Activated CD4-positive, alpha-beta T cell treated with anti-CD3 and anti-CD28 coated beads, Interleukin-2, amount 10 ng/mL, durations not matched to agents 24 days and 14 days (primary cell): ENCODE measurements at regions of chr11 and their contacts with region 1.

Region 1: GRCh38 chr11:128582496-128583366 is 4.6 kb downstream of the ETS1 start:
- DNase-seq: no peak
- H3K4me3 Mint-ChIP-seq: peak overlapping the region; percentile 59
- H3K27ac Mint-ChIP-seq: peak overlapping the region; percentile 81
- H3K4me1 Mint-ChIP-seq: peaks cover 35% of the 10 kb centered on the region
- H3K27me3 Mint-ChIP-seq: peaks cover 7% of the 10 kb centered on the region

Region 2: DNA sequence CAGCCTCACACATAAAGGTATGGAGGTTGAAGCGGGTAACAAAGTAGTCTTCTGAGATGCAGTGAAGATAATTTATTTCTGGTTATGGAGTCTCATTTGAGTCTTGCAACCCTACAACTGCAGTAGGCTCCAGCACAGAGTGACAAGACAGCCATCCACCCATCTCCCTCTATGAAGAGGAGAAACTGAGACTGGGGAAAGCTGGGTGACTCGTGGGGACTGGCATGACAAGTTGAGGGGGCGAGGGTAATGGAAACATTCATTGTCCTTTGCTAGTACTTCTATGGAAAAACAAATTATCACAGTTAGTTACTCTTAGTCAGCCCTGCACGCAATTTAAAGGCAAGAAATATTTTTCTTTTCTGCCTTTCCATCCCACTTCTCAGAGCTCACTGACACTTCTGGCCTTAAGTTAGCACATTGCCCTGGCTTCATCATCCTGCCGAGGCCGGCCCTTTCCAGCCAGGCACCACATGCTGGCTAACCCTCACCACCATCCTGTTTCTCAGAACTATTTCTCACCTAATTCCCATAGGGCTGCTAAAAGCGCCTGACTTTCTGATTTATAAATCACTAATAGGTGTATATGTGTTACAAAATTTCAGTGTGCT is 356.5 kb before region 1 on chr11:
- intact Hi-C with region 1: loop called (anchors 2 kb)
- DNase-seq: peak; percentile 58
- H3K4me3 Mint-ChIP-seq: peak overlapping the region; percentile 39
- H3K27ac Mint-ChIP-seq: peak overlapping the region; percentile 91
- H3K4me1 Mint-ChIP-seq: peaks cover 33% of the 10 kb centered on the region
- H3K27me3 Mint-ChIP-seq: no peaks in the 10 kb centered on the region

Region 3: DNA sequence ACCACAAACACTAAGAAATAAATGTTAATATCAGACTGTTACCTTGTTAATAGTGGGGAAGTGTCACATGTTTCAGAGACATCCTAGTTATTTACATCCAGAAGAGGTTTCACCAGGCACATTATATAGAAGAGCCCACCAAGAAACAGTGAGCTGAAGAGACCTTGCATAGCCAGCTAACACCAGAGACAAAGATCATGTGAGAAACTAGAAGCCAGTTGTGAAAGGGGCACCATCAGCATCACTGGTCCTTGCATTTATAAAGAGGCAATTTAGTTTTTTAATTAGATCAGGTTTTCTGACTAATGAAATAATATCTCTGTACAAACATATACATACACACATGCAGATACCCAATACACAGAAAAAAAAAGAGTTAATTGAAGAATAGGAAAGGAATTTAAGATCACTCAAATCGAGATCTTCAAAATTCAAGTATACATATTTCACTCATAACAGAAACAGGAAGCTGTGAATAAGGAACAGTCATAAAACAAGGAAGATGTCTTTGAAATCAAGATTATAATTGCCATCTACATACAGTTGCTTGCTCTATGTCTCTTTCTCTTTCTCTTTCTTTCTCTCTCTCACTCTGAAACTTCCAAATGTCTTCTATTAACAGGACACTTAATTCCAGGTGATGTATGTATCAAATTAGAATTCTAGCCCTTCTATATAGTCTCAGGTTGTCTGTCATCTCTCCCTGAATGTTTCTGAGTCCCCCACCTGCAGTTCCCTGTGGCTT is 344.0 kb before region 1 on chr11:
- intact Hi-C with region 1: loop called (anchors 2 kb)
- DNase-seq: no peak
- H3K4me3 Mint-ChIP-seq: peak overlapping the region; percentile 45
- H3K27ac Mint-ChIP-seq: peak overlapping the region; percentile 63
- H3K4me1 Mint-ChIP-seq: peaks cover 24% of the 10 kb centered on the region
- H3K27me3 Mint-ChIP-seq: peaks cover 2% of the 10 kb centered on the region

Region 4: GRCh38 chr11:128551611-128552335 is 31.0 kb before region 1 on chr11:
- intact Hi-C with region 1: loop called (anchors 1 kb)
- DNase-seq: peak; percentile 72
- H3K4me3 Mint-ChIP-seq: peak overlapping the region; percentile 24
- H3K27ac Mint-ChIP-seq: peak overlapping the region; percentile 79
- H3K4me1 Mint-ChIP-seq: peaks cover 57% of the 10 kb centered on the region
- H3K27me3 Mint-ChIP-seq: no peaks in the 10 kb centered on the region

Region 5: GRCh38 chr11:128624269-128625175 is 41.8 kb after region 1 on chr11:
- intact Hi-C with region 1: loop called (anchors 1 kb)
- DNase-seq: peak; percentile 85
- H3K4me3 Mint-ChIP-seq: peak overlapping the region; percentile 74
- H3K27ac Mint-ChIP-seq: peak overlapping the region; percentile 93
- H3K4me1 Mint-ChIP-seq: peaks cover 77% of the 10 kb centered on the region
- H3K27me3 Mint-ChIP-seq: no peaks in the 10 kb centered on the region

Region 6: GRCh38 chr11:128733440-128734102 is 150.8 kb after region 1 on chr11:
- intact Hi-C with region 1: loop called (anchors 5 kb)
- DNase-seq: peak; percentile 81
- H3K4me3 Mint-ChIP-seq: peak overlapping the region; percentile 72
- H3K27ac Mint-ChIP-seq: peak overlapping the region; percentile 83
- H3K4me1 Mint-ChIP-seq: peaks cover 77% of the 10 kb centered on the region
- H3K27me3 Mint-ChIP-seq: no peaks in the 10 kb centered on the region

Region 7: GRCh38 chr11:129143335-129143734 is 560.6 kb after region 1 on chr11:
- intact Hi-C with region 1: no loop called
- DNase-seq: no peak
- H3K4me3 Mint-ChIP-seq: no peak overlapping the region
- H3K27ac Mint-ChIP-seq: no peak overlapping the region
- H3K4me1 Mint-ChIP-seq: no peaks in the 10 kb centered on the region
- H3K27me3 Mint-ChIP-seq: no peaks in the 10 kb centered on the region